OCI-LY7 (cell line): ENCODE measurements at regions of chr2 and their contacts with region 1.

Region 1: DNA sequence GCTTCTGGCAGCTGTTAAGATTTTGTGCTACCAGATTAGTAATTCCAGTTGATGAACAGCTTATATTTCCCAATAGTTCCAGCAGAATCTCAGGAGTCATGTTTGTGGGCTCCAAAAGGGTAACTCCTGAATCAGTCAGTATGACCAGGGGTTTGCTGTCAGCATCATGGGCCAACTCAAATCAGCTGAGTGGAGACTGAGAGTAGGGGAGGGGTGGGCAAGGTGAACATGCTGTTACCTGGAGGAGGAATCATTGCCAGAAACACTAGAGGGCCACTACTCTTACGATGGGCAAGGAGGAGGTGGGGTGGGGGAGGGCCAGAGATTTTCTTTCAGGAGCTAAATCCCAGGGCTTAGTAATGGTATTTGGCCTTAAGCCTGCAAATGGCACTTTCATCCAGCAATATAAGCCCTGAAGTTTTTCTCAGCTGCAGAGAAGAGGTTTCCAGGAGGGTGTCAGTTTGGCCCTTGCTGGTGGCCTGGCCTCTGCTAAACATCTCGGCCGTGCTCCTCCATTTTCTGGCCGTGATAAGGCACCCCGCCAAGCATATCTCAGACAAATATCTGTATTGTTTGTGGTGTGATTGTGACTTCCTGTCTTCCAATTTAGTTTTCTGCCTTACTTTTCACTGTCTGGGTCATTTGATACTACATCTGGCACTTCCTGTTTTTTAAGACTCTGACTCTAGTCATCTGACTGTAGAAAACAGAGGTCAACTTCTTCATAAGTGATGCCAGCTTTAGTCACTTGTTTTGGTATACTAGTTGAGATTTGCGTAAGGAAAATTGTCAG is 120.5 kb upstream of the CXCR4 start:
- DNase-seq: peak; percentile 97
- H3K4me3 ChIP-seq: peak overlapping the region; percentile 54
- H3K27ac ChIP-seq: peak overlapping the region; percentile 100
- H3K4me1 ChIP-seq: peaks cover 88% of the 10 kb centered on the region
- CTCF ChIP-seq: peak; percentile 21; the same call in 1 of the 2 replicates

Region 2: GRCh38 chr2:135913727-135914365 is 324.6 kb before region 1 on chr2:
- CTCF ChIA-PET with region 1: interaction called, 3 read pairs
- POLR2A ChIA-PET with region 1: interaction called, 8 read pairs
- intact Hi-C with region 1: loop called (anchors 5 kb)
- DNase-seq: peak; percentile 73
- H3K4me3 ChIP-seq: no peak overlapping the region
- H3K27ac ChIP-seq: peak overlapping the region; percentile 5
- H3K4me1 ChIP-seq: peaks cover 27% of the 10 kb centered on the region
- CTCF ChIP-seq: peak; percentile 96

Region 3: DNA sequence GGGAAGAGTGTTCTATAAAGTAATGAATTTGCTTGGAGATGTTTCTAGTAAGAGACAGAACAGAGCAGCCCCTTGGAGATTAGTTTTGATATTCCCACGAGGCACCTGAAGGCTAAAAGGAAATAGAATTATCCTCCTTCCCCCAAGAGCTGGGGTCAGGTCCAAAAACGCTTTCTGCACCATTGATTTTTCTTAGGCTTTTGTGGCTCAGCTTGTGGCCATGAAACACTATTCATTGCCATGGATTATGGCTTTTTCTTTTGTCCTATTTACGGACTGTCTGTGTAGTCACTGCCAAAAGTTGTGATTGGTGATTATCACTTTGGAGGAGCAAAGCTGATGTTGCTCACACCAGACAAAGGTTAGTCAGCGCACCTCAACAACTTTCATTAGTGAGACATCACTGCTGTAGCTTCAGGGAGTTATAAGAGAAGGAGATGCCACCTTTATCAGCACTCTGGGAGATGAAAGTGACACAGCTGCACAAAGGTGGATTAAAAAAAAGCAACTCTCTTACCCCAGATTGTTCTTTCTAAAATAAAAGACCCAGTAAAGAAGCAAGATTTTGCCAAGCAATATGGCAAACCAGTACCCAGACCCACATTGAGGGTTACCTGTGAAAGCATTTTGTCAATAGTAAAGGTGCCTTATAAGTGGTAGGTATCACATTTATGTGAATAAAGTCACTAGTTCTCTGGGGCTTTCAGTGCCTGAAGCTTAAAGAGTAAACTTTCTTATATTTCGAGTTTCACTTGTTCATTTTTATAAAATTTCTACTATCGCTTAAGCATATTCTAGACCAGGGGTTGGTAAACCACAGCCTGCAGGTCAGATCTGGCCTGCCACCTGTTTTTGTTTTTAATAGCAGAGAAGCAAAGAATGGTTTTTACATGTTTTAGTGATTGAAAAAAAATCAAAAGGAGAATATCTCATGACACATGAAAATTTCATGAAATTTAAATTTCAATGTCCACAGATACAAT is 131.1 kb before region 1 on chr2:
- CTCF ChIA-PET with region 1: no interaction called
- POLR2A ChIA-PET with region 1: interaction called, 15 read pairs
- intact Hi-C with region 1: no loop called
- DNase-seq: no peak
- H3K4me3 ChIP-seq: peak overlapping the region; percentile 15
- H3K27ac ChIP-seq: peak overlapping the region; percentile 32
- H3K4me1 ChIP-seq: peaks cover 65% of the 10 kb centered on the region
- CTCF ChIP-seq: no peak; the same call in 1 of the 2 replicates

Region 4: GRCh38 chr2:136135921-136136906 is 102.3 kb before region 1 on chr2:
- CTCF ChIA-PET with region 1: interaction called, 5 read pairs
- POLR2A ChIA-PET with region 1: interaction called, 191 read pairs
- intact Hi-C with region 1: loop called (anchors 1 kb)
- DNase-seq: peak; percentile 93
- H3K4me3 ChIP-seq: peak overlapping the region; percentile 31
- H3K27ac ChIP-seq: peak overlapping the region; percentile 98
- H3K4me1 ChIP-seq: peaks cover 98% of the 10 kb centered on the region
- CTCF ChIP-seq: no peak

Region 5: GRCh38 chr2:136225950-136226835 is 12.3 kb before region 1 on chr2:
- CTCF ChIA-PET with region 1: interaction called, 15 read pairs
- POLR2A ChIA-PET with region 1: interaction called, 29 read pairs
- intact Hi-C with region 1: no loop called
- DNase-seq: no peak
- H3K4me3 ChIP-seq: no peak overlapping the region
- H3K27ac ChIP-seq: no peak overlapping the region
- H3K4me1 ChIP-seq: peaks cover 36% of the 10 kb centered on the region
- CTCF ChIP-seq: no peak

Region 6: GRCh38 chr2:136378712-136379595 is 140.5 kb after region 1 on chr2:
- CTCF ChIA-PET with region 1: interaction called, 3 read pairs
- POLR2A ChIA-PET with region 1: interaction called, 17 read pairs
- intact Hi-C with region 1: loop called (anchors 1 kb)
- DNase-seq: peak; percentile 91
- H3K4me3 ChIP-seq: no peak overlapping the region
- H3K27ac ChIP-seq: peak overlapping the region; percentile 48
- H3K4me1 ChIP-seq: peaks cover 90% of the 10 kb centered on the region
- CTCF ChIP-seq: peak; percentile 99